Activated naive CD4-positive, alpha-beta T cell treated with anti-CD3 and anti-CD28 coated beads, Interleukin-2, amount 10 ng/mL, durations not matched to agents 7 days and 5 days (primary cell): ENCODE measurements at regions of chr2 and their contacts with region 1.

Region 1: DNA sequence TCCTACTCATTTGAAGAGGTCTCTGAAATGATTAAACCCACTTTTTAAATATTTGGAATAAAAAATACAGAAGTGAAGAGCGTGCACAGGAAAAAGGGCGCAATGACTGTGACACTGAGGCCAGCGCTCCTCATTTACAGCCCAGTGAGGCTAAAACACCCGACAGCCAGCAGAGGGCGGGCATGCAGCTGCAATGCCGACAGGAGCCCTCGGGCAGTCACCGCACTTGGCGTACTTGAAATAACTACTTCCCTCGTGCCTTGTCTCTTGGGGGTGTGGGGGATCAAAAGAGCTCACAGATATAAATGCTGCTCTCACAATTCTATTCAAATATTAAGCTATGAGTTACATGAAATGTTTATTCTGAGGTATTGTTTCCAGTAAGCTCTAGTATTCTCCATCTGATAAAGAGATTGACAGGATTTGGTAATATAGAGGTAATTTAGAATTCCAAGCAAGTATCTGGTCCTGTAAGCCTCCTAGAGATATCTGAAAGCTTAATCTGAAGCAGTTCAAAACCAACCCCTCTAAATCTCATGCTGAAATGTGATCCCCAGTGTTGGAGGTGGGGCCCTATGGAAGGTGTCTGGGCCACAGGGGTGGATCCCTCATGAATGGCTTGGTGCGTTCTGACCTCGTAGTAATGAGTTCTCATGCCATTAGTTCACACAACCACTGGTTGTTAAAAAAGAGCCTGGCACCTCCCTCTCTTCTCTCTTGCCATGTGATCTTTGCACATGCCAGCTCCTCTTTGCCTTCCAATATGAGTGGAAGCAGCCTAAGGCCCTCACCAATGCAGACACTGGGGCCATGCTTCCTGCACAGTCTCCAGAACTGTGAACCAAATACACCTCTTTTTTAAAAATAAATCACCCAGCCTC is 93.6 kb downstream of the ZAP70 start:
- DNase-seq: peak; percentile 85
- H3K4me3 Mint-ChIP-seq: no peak overlapping the region
- H3K27ac Mint-ChIP-seq: no peak overlapping the region
- H3K4me1 Mint-ChIP-seq: no peaks in the 10 kb centered on the region
- H3K27me3 Mint-ChIP-seq: no peaks in the 10 kb centered on the region

Region 2: DNA sequence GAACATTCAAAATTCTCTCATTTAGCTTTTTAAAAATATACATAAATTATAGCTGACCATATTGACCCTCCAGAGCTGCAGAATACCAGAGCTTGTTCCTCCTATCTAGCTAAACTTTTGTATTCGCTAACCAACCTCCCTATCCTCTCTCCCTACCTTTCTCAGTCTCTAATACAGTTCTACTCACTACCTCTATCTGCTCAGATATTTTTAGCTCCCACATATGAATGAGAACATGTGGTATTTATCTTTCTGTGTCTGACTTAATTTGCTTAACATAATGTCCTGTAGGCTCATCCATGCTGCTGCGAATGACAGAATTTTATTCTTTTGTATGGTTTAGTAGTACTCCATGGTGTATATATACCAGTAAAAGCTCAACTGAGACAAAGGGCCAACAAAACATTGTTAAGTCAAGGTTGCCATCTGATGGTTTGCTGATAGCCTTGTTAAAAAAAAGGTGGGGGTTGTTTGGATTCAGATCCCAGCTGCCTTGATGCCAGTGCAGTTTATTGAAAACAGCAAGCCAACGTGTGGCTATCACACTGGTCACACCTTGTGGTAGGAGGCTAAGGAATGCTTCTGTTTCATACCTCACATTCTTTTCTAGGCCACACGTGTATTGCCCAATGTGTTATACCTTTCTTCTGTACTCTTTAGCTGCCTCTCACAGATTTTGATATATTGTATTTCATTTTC is 381.5 kb after region 1 on chr2:
- CTCF ChIA-PET with region 1: interaction called, 10 read pairs
- DNase-seq: no peak
- H3K4me3 Mint-ChIP-seq: no peak overlapping the region
- H3K27ac Mint-ChIP-seq: no peak overlapping the region
- H3K4me1 Mint-ChIP-seq: no peaks in the 10 kb centered on the region
- H3K27me3 Mint-ChIP-seq: no peaks in the 10 kb centered on the region

Region 3: DNA sequence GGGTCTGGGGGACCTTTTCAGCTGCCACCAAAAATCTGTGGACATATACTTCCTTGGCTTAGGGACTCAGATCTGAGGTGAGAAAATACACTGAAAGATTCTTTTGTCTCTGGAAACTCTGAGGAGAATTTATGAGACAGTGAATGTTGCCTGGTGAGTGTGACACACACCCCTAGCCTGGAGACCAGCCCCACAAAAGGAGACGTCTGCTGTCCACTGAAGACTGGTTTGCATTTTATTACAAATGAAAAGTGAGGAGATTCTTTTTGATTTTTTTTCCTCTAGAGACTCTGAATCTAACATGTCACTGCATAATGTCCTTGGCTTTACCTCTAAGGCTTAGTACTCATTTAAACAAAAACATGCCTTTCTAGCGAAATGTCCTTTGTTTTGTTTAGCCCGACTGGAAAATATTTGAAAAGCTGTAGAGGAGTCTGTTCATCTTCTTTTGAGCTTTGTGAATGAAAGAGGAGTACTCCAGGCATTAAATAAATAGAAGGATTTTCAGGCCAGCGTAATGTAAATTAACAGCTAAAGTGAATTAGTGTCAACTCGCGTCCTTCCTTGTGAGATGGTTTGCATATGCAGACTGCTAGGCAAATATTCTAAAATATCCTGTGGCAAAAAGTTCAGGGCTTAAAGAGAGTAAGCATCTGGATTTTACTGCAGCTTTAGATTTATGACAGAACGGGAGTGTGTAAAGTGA is 405.3 kb after region 1 on chr2:
- CTCF ChIA-PET with region 1: no interaction called
- DNase-seq: no peak
- H3K4me3 Mint-ChIP-seq: no peak overlapping the region
- H3K27ac Mint-ChIP-seq: no peak overlapping the region
- H3K4me1 Mint-ChIP-seq: no peaks in the 10 kb centered on the region
- H3K27me3 Mint-ChIP-seq: peaks cover 27% of the 10 kb centered on the region

Region 4: GRCh38 chr2:98269274-98269673 is 462.3 kb after region 1 on chr2:
- CTCF ChIA-PET with region 1: interaction called, 15 read pairs
- DNase-seq: no peak
- H3K4me3 Mint-ChIP-seq: no peak overlapping the region
- H3K27ac Mint-ChIP-seq: no peak overlapping the region
- H3K4me1 Mint-ChIP-seq: no peaks in the 10 kb centered on the region
- H3K27me3 Mint-ChIP-seq: peaks cover 12% of the 10 kb centered on the region

Region 5: DNA sequence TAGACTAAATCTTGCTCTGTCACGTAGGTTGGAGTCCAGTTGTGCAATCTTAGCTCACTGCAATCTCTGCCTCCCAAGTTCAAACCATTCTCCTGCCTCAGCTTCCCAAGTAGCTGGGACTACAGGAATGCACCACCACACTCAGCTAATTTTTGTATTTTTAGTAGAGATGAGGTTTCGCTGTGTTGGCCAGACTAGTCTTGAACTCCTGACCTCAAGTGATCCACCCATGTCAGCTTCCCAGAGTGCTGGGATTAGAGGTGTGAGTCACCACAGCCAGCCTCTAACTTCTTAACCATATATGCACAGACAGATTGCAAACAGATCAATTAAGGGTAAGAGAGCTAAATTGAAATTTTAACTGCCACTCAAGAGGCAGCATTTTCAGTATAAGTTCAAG is 517.2 kb after region 1 on chr2:
- CTCF ChIA-PET with region 1: no interaction called
- DNase-seq: no peak
- H3K4me3 Mint-ChIP-seq: no peak overlapping the region
- H3K27ac Mint-ChIP-seq: no peak overlapping the region
- H3K4me1 Mint-ChIP-seq: no peaks in the 10 kb centered on the region
- H3K27me3 Mint-ChIP-seq: peaks cover 7% of the 10 kb centered on the region